GM12878 (cell line): ENCODE measurements at regions of chr13 and their contacts with region 1.

Region 1: GRCh38 chr13:40777166-40777808 is 6.3 kb upstream of the MRPS31 start:
- DNase-seq: no peak
- ATAC-seq: peak; percentile 95
- H3K4me3 ChIP-seq: no peak overlapping the region
- H3K27ac ChIP-seq: peak overlapping the region; percentile 17; the same call in 1 of the 2 replicates
- H3K4me1 ChIP-seq: peaks cover 11% of the 10 kb centered on the region
- H3K27me3 ChIP-seq: no peaks in the 10 kb centered on the region
- CTCF ChIP-seq: peak; percentile 53 to 60 (median 57)
- EP300 ChIP-seq: no peak
- POLR2A ChIP-seq: no peak
- RAD21 ChIP-seq: peak; percentile 73

Region 2: DNA sequence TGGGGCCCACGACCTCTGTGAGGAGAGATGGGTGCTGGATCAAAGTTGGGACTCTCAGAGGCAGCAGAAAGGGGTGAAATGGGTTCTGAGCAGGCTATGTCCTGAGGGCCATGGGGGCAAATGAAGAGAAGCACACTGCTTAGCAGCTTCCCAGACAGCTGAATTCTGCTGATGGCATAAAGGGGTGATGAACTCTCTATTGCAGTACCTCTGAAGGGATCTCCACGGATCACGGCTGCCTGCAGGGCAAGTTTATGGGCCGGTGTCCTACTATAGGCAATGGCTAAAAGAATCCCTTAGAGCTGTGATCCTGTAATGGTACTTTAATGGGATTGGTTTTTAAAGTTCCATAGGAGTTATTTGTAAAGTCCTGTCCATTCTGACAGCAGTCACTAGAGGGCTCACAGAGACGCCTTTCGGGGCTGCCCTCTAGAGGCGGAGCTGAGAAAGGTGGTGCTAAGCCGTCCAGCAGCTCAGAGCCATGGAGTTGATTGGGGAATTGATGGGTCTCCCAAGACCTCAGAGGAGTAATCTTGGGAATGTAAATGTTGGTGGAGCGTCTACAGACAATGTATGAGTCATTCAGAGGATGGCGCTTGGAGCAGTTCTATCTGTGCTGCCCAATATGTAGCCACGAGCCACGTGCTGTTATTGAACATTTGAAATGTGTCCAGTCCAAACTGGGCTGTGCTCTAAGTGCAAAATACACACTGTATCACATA is 834.6 kb before region 1 on chr13:
- CTCF ChIA-PET with region 1: interaction called, 19 read pairs
- POLR2A ChIA-PET with region 1: no interaction called
- RAD21 ChIA-PET with region 1: interaction called, 5 read pairs
- SMC1A ChIA-PET with region 1: interaction called, 7 read pairs
- in situ Hi-C with region 1: no loop called
- intact Hi-C with region 1: loop called (anchors 5 kb)
- DNase-seq: peak; percentile 50
- ATAC-seq: peak; percentile 100
- H3K4me3 ChIP-seq: no peak overlapping the region
- H3K27ac ChIP-seq: no peak overlapping the region
- H3K4me1 ChIP-seq: no peaks in the 10 kb centered on the region
- H3K27me3 ChIP-seq: no peaks in the 10 kb centered on the region; a peak in 2 of 4 replicates
- CTCF ChIP-seq: peak; percentile 100; a peak in 5 of 6 replicates
- EP300 ChIP-seq: no peak
- POLR2A ChIP-seq: no peak
- RAD21 ChIP-seq: peak; percentile 95

Region 3: DNA sequence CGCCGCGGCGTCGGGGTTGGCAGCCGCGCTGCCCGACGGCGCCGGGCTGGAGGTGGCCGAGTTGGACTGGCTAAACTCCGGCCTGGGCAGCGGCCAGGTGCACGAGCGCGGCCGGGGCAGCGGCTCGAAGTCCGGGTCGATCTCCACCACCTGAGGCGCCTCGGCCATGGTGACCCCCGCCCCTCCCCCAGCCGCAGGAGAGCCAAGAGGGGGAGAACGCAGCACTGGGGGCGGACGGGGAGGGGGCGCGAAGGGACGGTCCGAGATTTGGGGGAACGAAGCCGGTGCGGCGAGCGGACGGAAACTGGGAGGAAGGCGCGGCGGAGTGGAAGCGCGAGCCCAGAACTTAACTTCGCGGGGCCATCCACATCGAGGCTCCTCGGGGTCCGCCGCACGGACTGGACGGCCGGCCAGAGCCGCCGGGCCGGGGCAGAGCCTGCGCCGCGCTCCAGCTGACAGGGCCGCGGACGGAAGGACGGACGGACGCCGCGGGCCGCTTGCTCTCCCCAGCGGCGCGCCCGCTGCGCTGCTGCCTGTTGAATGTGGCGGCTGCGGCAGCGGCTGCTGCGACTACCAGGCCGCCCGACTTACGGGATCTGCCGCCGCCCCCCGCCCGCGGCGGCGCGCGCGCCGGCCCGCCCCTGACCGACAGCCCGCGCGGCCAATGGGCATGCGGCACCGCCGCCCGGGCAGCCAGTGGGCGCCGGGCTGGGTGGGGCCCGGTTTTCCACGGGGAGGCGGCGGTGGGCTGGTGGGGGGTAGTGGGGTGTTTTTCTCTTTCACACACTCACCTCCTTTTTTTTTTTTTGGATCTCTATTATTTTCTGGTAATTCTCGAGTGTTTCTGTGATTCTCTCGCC is 111.0 kb before region 1 on chr13 and contains the start of gene FOXO1:
- CTCF ChIA-PET with region 1: interaction called, 32 read pairs
- POLR2A ChIA-PET with region 1: no interaction called
- RAD21 ChIA-PET with region 1: interaction called, 11 read pairs
- SMC1A ChIA-PET with region 1: interaction called, 15 read pairs
- in situ Hi-C with region 1: no loop called
- intact Hi-C with region 1: loop called (anchors 5 kb)
- DNase-seq: no peak
- ATAC-seq: peak; percentile 68
- H3K4me3 ChIP-seq: peak within 1 kb of the TSS; percentile 92
- H3K27ac ChIP-seq: peak within 1 kb of the TSS; percentile 89
- H3K4me1 ChIP-seq: peaks cover 9% of the 10 kb centered on the region
- H3K27me3 ChIP-seq: no peaks in the 10 kb centered on the region
- CTCF ChIP-seq: peak in 1 of 3 experiments; percentile 14; a peak in 1 of 6 replicates
- EP300 ChIP-seq: no peak
- POLR2A ChIP-seq: peak; percentile 92
- RAD21 ChIP-seq: no peak
- polyA plus RNA-seq, gene FOXO1: 0.64 to 0.72 TPM

Region 4: GRCh38 chr13:40756042-40756441 is 21.2 kb before region 1 on chr13:
- CTCF ChIA-PET with region 1: interaction called, 14 read pairs
- POLR2A ChIA-PET with region 1: no interaction called
- RAD21 ChIA-PET with region 1: no interaction called
- SMC1A ChIA-PET with region 1: interaction called, 3 read pairs
- in situ Hi-C with region 1: no loop called
- intact Hi-C with region 1: no loop called
- DNase-seq: no peak
- ATAC-seq: peak; percentile 70
- H3K4me3 ChIP-seq: no peak overlapping the region
- H3K27ac ChIP-seq: peak overlapping the region; percentile 65
- H3K4me1 ChIP-seq: peaks cover 19% of the 10 kb centered on the region
- H3K27me3 ChIP-seq: no peaks in the 10 kb centered on the region
- CTCF ChIP-seq: no peak
- EP300 ChIP-seq: no peak
- POLR2A ChIP-seq: no peak
- RAD21 ChIP-seq: no peak

Region 5: GRCh38 chr13:40813661-40814454 is 36.6 kb after region 1 on chr13:
- CTCF ChIA-PET with region 1: interaction called, 23 read pairs
- POLR2A ChIA-PET with region 1: no interaction called
- RAD21 ChIA-PET with region 1: interaction called, 9 read pairs
- SMC1A ChIA-PET with region 1: interaction called, 10 read pairs
- in situ Hi-C with region 1: no loop called
- intact Hi-C with region 1: loop called (anchors 5 kb)
- DNase-seq: no peak
- ATAC-seq: peak; percentile 77
- H3K4me3 ChIP-seq: no peak overlapping the region
- H3K27ac ChIP-seq: no peak overlapping the region
- H3K4me1 ChIP-seq: peaks cover 6% of the 10 kb centered on the region; the same call in 1 of the 2 replicates
- H3K27me3 ChIP-seq: no peaks in the 10 kb centered on the region
- CTCF ChIP-seq: peak; percentile 42 to 73 (median 56)
- EP300 ChIP-seq: no peak
- POLR2A ChIP-seq: no peak
- RAD21 ChIP-seq: peak; percentile 60